Natural killer cell (primary cell): ENCODE measurements at regions of chr17 and their contacts with region 1.

Region 1: DNA sequence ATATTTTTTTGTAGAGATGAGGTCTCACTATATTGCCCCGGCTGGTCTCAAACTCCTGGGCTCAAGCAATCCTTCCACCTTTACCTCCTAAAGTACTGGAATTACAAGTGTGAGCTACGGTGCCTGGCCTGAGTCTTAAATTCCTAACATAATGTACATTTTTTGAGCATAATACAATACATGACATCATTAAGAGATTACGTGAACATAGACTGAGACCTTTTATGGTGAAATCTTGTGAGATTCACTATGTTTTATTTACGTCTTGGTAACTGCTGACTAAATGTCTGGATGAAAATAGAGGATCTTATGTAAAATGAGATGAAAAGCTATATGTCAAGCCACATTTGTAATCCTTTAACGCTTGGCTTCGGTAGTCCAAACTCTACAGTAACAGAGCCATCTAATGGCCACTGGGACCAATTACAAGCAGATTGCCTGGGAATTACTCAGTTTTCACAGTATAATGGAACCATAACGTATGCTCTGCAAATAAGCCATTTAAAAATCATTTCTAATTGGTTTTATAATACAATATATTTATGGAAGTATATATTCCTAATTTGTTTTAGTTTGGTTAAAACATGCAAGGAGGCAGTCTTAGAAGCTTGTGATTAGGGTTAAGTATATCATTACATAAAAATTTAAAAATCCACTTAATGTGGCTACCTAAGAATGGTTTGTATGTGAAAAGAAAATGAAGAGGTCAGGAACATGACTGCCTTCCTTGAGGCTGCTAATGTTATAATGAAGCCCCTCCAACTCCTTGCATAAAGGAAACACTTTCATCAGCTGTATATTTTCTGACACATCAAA is 8.1 kb upstream of the EFCAB13 start:
- DNase-seq: peak in 1 of 2 donors; percentile 76
- ATAC-seq: peak; percentile 75 to 96 (median 88)
- H3K4me3 ChIP-seq: no peak overlapping the region
- H3K4me3 Mint-ChIP-seq: no peak overlapping the region
- H3K27ac ChIP-seq: no peak overlapping the region
- H3K27ac Mint-ChIP-seq: no peak overlapping the region
- H3K4me1 ChIP-seq: no peaks in the 10 kb centered on the region
- H3K4me1 Mint-ChIP-seq: no peaks in the 10 kb centered on the region
- H3K27me3 ChIP-seq: no peaks in the 10 kb centered on the region
- H3K27me3 Mint-ChIP-seq: peaks cover 7 to 9% of the 10 kb centered on the region in 2 donors
- CTCF ChIP-seq: peak; percentile 88

Region 2: DNA sequence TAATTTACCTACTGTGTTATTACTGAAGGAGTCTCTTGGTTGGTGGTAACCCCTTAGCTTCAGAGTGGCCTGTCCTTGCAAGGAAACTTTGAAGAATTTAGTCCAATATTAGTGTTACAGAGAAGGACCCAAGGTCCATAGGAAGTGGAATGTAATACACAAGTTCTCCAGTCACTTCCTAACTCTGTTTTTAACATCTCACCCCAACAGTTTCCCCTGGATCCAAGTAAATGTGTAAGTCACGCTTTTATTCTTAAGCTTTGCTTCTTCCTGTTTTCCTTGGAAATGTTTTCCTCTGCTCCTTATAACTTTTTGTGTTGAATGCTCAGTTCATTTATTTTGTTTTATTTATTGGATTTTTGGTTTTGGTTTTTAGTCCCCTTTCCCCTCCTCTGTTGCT is 310.8 kb before region 1 on chr17:
- intact Hi-C with region 1: loop called (anchors 5 kb)
- DNase-seq: no peak
- ATAC-seq: no peak
- H3K4me3 ChIP-seq: no peak overlapping the region
- H3K4me3 Mint-ChIP-seq: no peak overlapping the region
- H3K27ac ChIP-seq: no peak overlapping the region
- H3K27ac Mint-ChIP-seq: no peak overlapping the region
- H3K4me1 ChIP-seq: no peaks in the 10 kb centered on the region
- H3K4me1 Mint-ChIP-seq: peaks cover 0 to 6% of the 10 kb centered on the region in 2 donors
- H3K27me3 ChIP-seq: no peaks in the 10 kb centered on the region
- H3K27me3 Mint-ChIP-seq: no peaks in the 10 kb centered on the region
- CTCF ChIP-seq: no peak

Region 3: DNA sequence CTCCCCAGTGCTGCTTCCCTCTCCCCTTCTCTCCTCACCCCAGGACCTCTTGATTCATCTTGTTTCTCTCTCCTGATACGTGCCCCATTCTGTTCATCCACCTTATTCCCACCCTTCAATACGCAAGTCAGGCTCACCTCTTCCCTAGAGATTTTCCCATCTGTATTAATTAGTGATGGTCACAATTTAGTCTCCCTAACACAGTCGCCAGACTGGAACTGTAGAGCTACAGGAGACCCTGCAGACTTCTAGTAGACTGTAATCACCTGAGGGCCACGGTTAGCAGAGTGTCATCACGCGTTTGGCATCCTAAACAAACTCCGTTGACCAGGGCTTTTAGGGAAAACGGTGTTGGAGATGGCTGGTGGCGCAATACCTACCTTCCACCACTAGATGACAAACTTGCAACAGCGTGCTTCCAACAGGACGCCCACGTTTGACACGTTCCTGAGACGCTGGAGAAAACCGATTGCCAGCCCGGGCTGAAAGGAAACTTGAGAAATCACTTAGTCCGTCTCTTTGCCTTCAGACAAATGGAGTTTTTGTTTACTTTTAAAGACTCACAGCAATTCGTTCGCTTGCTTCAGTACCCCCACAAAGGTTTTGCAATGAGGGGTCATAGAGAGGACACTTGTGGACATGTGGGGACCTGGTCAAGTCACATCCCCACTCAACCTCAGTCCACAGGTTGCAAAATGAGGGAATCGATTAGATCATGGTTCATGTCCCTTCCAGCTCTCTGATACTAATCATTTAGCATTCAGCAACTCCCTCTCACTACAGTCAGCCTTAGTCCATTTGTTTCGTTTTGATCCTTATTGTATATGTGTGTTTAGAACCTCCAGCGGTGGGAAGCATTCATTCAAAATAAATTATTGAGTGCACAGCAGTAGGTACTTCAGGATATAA is 85.9 kb before region 1 on chr17:
- intact Hi-C with region 1: loop called (anchors 1 kb)
- DNase-seq: peak; percentile 47 to 88
- ATAC-seq: peak; percentile 86 to 99 (median 91)
- H3K4me3 ChIP-seq: no peak overlapping the region
- H3K4me3 Mint-ChIP-seq: peak overlapping the region; percentile 60
- H3K27ac ChIP-seq: no peak overlapping the region
- H3K27ac Mint-ChIP-seq: peak overlapping the region in 1 of 2 donors; percentile 19
- H3K4me1 ChIP-seq: peaks cover 9% of the 10 kb centered on the region
- H3K4me1 Mint-ChIP-seq: peaks cover 11 to 17% of the 10 kb centered on the region in 2 donors
- H3K27me3 ChIP-seq: no peaks in the 10 kb centered on the region
- H3K27me3 Mint-ChIP-seq: peaks cover 10 to 11% of the 10 kb centered on the region in 2 donors
- CTCF ChIP-seq: peak; percentile 93